ENCODE measurements at regions of chr1 and their contacts with region 1.

Region 1: DNA sequence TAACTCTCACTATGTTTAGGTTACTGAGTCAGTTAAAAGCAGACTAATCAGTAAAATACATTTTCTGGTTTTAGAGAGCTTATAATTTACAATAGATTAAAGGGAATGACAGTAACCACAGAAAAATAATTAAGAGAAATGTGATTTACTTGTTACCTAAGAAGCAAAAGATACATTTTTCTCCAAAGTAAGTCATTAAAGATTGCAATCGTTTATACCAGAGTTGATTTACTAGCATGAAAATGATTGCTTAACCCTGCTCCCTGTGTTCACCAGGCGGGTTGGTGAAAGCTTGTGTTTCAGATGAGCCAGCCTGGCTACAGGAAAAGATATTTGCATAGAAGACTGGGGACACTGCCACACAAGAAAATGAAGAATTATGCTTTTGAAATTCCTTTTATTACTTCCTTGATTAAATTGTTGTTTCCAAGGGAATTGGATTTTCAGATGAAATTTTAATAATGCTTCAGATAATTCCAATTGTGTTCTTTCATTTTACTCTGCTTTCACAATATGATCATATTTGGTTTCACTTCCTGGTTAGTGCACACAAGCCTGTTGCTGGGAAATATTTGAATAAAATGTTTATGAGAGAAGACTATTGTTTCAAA is 27.9 kb downstream of the LRRC8B start:
- DNase-seq: no peak
- H3K4me3 ChIP-seq: no peak overlapping the region
- H3K27ac ChIP-seq: no peak overlapping the region
- H3K4me1 ChIP-seq: peaks cover 0 to 3% (median 0%) of the 10 kb centered on the region in 4 experiments; a peak in 1 of 7 replicates
- H3K27me3 ChIP-seq: no peaks in the 10 kb centered on the region
- CTCF ChIP-seq: no peak
- EP300 ChIP-seq: no peak
- POLR2A ChIP-seq: no peak
- RAD21 ChIP-seq: no peak

Region 2: DNA sequence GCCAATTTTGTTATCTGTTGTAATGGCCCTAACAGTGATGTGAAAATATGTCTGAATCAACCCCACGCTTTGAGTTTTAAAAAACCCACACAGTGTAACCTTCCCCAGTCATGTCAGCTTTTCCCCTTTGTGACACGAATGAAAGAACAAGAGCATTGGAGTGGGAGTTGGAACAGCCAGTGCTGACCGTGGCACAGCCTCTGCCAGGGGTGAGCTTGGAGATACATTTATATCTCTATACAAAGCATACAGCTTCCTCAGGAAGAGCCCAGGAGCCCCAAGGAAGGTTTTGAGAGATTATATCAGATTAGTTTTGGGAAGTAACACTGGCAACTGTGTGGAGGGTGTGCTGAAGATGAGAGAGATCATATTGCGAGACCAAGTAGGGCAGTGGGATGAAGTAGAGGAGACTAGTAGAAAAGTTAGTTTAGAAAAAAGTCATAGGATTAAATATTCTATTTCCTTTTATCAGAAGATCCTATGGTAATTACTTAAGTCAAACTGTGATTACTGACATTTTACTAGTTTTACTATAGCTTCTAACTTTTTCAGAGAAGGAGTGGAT is 12.1 kb before region 1 on chr1:
- CTCF ChIA-PET with region 1: interaction called, 13 read pairs
- POLR2A ChIA-PET with region 1: interaction called, 5 read pairs
- DNase-seq: no peak
- H3K4me3 ChIP-seq: no peak overlapping the region
- H3K27ac ChIP-seq: no peak overlapping the region
- H3K4me1 ChIP-seq: no peaks in the 10 kb centered on the region
- H3K27me3 ChIP-seq: no peaks in the 10 kb centered on the region
- CTCF ChIP-seq: no peak
- EP300 ChIP-seq: no peak
- POLR2A ChIP-seq: no peak
- RAD21 ChIP-seq: no peak

Region 3: DNA sequence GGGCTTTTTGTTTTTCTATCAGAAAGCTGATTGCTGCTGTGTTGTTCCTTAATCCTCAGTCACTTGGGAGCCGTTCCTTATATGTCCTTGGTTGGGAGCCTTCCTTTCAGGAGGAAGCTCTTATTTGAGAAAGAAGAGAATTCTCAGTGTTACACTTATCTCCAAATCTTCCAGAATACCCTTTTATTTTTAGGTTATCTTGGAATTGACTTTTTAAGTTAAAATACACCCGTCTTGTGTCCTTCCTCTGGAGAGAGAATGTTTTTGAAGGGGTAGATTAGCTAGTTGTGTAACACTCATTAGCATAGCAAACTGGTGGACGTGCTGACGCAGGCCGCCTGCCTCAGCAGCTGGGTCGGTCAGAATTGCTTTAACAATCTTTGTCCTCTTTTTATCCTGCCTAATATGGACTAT is 14.2 kb after region 1 on chr1:
- CTCF ChIA-PET with region 1: interaction called, 16 read pairs
- POLR2A ChIA-PET with region 1: interaction called, 3 read pairs
- DNase-seq: no peak
- H3K4me3 ChIP-seq: 0 out of 8 replicates have a peak overlapping the region, but pooled peaks of 1 of the 4 experiments have one; percentile 13
- H3K27ac ChIP-seq: peak overlapping the region; percentile 37; the same call in 1 of the 2 replicates
- H3K4me1 ChIP-seq: peaks cover 4 to 11% (median 9%) of the 10 kb centered on the region in 4 experiments; a peak in 6 of 7 replicates
- H3K27me3 ChIP-seq: no peaks in the 10 kb centered on the region
- CTCF ChIP-seq: no peak
- EP300 ChIP-seq: no peak
- POLR2A ChIP-seq: no peak
- RAD21 ChIP-seq: no peak

Measured in H1 (cell line).